Panc1 (cell line): ENCODE measurements at regions of chr5 and their contacts with region 1.

Region 1: DNA sequence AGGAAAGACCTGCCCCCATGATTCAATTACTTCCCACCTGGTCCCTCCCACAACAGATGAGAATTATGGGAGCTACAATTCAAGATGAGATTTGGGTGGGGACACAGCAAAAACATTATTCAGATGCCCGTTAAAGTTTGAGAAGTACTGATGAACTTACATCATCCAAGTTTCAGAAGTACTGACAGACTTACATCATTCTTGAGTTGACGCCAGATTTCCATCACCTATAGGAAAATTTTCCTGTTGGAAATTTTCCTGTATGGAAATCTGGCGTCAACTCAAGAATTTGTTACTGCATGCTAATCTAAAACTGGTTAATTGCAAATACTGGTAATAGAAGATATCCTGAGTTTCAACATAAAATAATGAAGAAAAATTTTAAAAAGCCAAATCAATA is 975.9 kb downstream of the MAT2B start:
- DNase-seq: no peak
- ATAC-seq: no peak
- H3K4me3 ChIP-seq: no peak overlapping the region
- H3K27ac ChIP-seq: no peak overlapping the region
- H3K4me1 ChIP-seq: no peaks in the 10 kb centered on the region
- H3K27me3 ChIP-seq: no peaks in the 10 kb centered on the region
- CTCF ChIP-seq: no peak

Region 2: DNA sequence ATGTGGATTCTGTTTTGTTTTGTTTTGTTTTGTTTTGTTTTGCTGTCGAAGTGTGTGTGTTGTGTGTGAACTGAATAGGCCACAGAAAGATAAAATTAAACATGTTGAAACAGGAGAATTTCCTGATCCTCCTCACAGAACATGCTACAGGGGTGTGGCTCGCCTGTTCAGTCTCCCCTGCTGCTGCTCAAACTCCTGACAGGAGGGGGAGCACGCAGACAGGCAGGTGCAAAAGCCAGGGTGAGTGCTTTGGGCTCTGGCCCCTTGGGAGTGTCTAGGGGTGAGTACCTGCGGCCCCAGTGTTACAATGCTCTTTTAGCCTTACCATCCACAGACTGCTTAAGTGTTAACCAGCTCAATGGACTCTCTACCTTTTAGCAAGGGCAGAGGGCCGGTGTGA is 502.4 kb before region 1 on chr5:
- CTCF ChIA-PET with region 1: no interaction called
- POLR2A ChIA-PET with region 1: interaction called, 19 read pairs
- in situ Hi-C with region 1: no loop called
- intact Hi-C with region 1: no loop called
- DNase-seq: no peak
- ATAC-seq: no peak
- H3K4me3 ChIP-seq: no peak overlapping the region
- H3K27ac ChIP-seq: no peak overlapping the region
- H3K4me1 ChIP-seq: no peaks in the 10 kb centered on the region
- H3K27me3 ChIP-seq: no peaks in the 10 kb centered on the region
- CTCF ChIP-seq: no peak